Gastrocnemius medialis (tissue), 4 donors: ENCODE measurements at regions of chr4 and their contacts with region 1.

Region 1: GRCh38 chr4:85084380-85085094 is 118.0 kb upstream of the WDFY3 start:
- DNase-seq: peak in 1 of 2 donors; percentile 3
- ATAC-seq: no peak
- H3K4me3 ChIP-seq: no peak overlapping the region
- H3K27ac ChIP-seq: no peak overlapping the region
- H3K4me1 ChIP-seq: no peaks in the 10 kb centered on the region
- H3K27me3 ChIP-seq: no peaks in the 10 kb centered on the region
- CTCF ChIP-seq: peak; percentile 39 to 71 (median 53)
- POLR2A ChIP-seq: no peak

Region 2: GRCh38 chr4:85180533-85180932 is 96.0 kb after region 1 on chr4:
- in situ Hi-C with region 1: no loop called
- intact Hi-C with region 1: no loop called
- DNase-seq: no peak
- ATAC-seq: no peak
- H3K4me3 ChIP-seq: no peak overlapping the region
- H3K27ac ChIP-seq: no peak overlapping the region
- H3K4me1 ChIP-seq: no peaks in the 10 kb centered on the region
- H3K27me3 ChIP-seq: no peaks in the 10 kb centered on the region
- CTCF ChIP-seq: no peak
- POLR2A ChIP-seq: no peak

Region 3: DNA sequence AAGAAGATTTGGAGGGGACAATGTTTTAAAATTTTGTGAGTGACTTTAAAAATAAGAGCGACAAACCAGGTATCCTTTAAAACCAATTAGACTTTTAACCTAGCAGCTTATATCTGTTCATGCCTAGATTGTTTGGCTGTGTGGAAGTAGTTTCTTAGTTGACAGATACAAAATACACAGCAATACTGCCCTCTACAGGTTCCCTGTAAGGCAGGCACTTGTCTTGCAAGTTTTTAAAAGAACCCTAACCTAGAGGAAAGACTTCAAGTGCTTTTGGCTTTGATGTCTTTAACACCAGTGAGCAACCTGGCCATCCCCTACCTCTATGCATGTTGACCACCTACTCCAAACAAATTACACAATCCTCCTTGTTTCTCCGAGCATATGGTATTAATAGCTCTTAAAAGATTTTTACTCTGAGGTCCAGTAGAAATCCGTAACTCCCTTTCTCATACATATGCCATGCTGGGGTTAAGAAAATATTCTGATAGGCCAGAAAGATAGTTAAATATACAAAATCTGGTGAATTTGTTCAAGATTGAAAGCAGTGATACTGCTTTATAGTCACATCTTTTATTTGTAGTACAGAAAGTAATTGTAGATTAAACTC is 663.5 kb after region 1 on chr4:
- in situ Hi-C with region 1: no loop called
- intact Hi-C with region 1: loop called (anchors 5 kb)
- DNase-seq: no peak
- ATAC-seq: peak; percentile 60 to 79
- H3K4me3 ChIP-seq: no peak overlapping the region
- H3K27ac ChIP-seq: no peak overlapping the region
- H3K4me1 ChIP-seq: peaks cover 0 to 3% of the 10 kb centered on the region in 2 donors
- H3K27me3 ChIP-seq: no peaks in the 10 kb centered on the region
- CTCF ChIP-seq: peak; percentile 53 to 81 (median 69)
- POLR2A ChIP-seq: no peak

Region 4: DNA sequence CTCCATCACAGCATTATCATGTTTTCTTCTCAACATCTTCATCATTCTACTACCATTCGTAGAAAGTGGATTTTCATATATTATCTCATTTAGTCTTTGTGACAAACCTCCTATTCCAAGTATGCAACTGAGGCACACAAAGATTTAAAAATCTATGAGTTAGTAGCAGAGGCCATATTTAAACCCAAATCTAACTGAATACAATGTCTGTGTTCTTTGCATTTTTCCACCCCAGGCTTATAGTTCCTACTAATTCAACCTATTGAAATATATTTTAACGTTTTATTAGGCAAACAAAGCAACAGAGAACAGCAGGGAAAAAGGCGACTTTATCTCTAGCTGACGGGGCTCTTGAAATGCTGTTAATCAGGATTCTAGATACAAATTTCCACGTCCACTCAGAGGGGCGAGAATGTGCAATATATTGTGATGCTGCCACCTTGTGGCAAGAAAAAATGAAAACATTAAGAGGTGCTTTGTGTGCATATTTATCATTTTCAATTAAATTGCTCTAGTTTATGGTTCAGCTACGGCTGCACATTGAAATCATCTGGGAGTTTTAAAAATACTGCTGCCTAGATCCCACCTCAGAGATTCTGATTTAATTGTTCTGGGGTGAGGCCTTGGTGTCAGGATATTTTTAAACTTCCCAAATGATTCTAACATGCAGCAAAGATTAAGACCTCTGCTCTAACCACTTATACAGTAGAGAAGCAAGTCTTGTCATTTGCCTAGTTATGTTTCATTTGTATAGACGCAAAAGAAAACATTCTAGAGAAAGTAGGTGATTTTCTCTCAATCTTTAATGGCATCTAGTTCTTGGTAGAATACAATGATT is 959.4 kb after region 1 on chr4:
- in situ Hi-C with region 1: loop called in 1 of 4 experiments (anchors 10 kb)
- intact Hi-C with region 1: loop called (anchors 10 kb)
- DNase-seq: no peak
- ATAC-seq: peak; percentile 46 to 56
- H3K4me3 ChIP-seq: no peak overlapping the region
- H3K27ac ChIP-seq: no peak overlapping the region
- H3K4me1 ChIP-seq: peaks cover 0 to 4% of the 10 kb centered on the region in 2 donors
- H3K27me3 ChIP-seq: no peaks in the 10 kb centered on the region
- CTCF ChIP-seq: peak; percentile 28 to 68 (median 56)
- POLR2A ChIP-seq: no peak